ENCODE measurements at regions of chr21 and their contacts with region 1.

Region 1: GRCh38 chr21:34078915-34079314 is 5.5 kb downstream of the MRPS6 start:
- DNase-seq: peak in 5 of 9 experiments; percentile 22 to 56 (median 34)
- ATAC-seq: no peak
- H3K4me3 ChIP-seq: no peak overlapping the region
- H3K4me3 Mint-ChIP-seq: peak overlapping the region; percentile 49
- H3K27ac ChIP-seq: peak overlapping the region in 1 of 2 experiments; percentile 17
- H3K27ac Mint-ChIP-seq: peak overlapping the region; percentile 46
- H3K4me1 ChIP-seq: peaks cover 85% of the 10 kb centered on the region
- H3K4me1 Mint-ChIP-seq: peaks cover 95% of the 10 kb centered on the region
- H3K27me3 ChIP-seq: no peaks in the 10 kb centered on the region
- H3K27me3 Mint-ChIP-seq: no peaks in the 10 kb centered on the region
- CTCF ChIP-seq: no peak

Region 2: DNA sequence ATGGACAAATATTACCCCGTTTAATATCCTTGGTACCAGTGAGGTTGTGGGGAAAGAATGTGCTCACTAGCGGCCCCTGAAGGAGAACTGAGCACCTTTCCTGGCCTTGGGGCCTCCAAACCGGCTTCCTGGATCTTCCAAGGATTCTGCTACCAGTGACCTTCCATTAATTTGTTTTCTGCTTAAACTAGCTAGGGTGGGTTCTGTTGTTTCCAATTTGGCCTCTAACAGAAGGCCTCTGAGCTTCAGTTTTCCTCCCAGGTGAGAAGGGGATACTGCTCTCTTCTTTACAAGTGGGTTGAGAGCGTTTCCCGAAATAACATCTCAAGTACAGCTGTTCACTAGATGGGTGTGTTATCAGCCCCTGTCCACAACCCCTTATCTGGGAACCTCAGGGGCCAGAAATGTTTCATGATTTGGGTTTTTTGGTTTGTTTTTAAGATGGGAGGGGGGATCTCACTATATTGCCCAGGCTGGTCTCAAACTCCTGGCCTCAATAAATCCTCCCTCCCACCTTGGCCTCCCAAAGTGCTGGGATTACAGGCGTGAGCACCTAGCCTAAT is 692.6 kb before region 1 on chr21:
- CTCF ChIA-PET with region 1: no interaction called
- POLR2A ChIA-PET with region 1: no interaction called
- intact Hi-C with region 1: loop called in 1 of 2 experiments (anchors 5 kb)
- DNase-seq: peak in 1 of 9 experiments; percentile 19
- ATAC-seq: no peak
- H3K4me3 ChIP-seq: no peak overlapping the region
- H3K4me3 Mint-ChIP-seq: no peak overlapping the region
- H3K27ac ChIP-seq: no peak overlapping the region
- H3K27ac Mint-ChIP-seq: no peak overlapping the region
- H3K4me1 ChIP-seq: peaks cover 42% of the 10 kb centered on the region
- H3K4me1 Mint-ChIP-seq: peaks cover 46% of the 10 kb centered on the region
- H3K27me3 ChIP-seq: peaks cover 0 to 33% of the 10 kb centered on the region in 2 experiments
- H3K27me3 Mint-ChIP-seq: peaks cover 3% of the 10 kb centered on the region
- CTCF ChIP-seq: no peak

Region 3: DNA sequence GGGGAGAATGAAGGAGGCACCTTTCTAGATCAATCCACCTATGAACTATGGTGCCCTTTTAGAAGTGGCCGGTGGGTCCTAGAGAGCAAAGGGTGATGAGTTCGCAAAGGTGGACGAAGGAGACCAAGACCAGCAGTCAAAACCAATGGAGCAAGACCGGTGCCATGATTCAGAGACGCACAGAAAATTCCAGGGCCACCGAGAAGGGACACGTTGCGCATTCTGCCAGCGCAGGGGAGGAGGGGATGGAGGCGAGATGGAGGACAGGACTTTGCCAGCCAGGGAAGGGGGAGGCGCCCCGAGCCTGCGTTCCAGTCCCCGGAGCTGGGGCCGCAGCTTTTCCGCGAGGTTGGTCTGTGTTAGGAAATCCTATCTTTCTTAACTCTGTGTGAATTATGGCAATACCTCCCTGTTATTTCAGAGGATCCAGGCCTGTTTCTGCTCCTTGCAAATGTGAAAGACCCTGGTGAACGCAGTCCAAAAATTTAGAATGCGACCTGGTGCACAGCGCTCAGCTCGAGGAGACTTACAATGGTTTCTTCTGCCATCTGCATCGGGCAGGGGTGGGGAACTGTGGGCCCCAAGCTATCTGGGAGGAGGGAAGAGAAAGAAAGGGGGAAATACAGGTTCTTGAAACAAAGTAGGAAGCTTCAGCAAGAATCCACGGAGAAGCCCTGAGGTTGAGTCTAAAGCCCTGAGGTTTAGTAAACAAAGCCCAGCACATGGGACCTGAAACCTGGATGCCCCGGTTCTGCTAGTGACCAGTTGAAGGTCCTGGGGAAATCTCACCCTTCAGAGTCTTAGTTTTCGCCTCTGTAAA is 123.8 kb after region 1 on chr21:
- CTCF ChIA-PET with region 1: interaction called, 5 read pairs
- POLR2A ChIA-PET with region 1: interaction called, 6 read pairs
- intact Hi-C with region 1: loop called (anchors 5 kb)
- DNase-seq: no peak
- ATAC-seq: no peak
- H3K4me3 ChIP-seq: peak overlapping the region; percentile 46 to 56
- H3K4me3 Mint-ChIP-seq: peak overlapping the region; percentile 81
- H3K27ac ChIP-seq: no peak overlapping the region
- H3K27ac Mint-ChIP-seq: no peak overlapping the region
- H3K4me1 ChIP-seq: peaks cover 30% of the 10 kb centered on the region
- H3K4me1 Mint-ChIP-seq: peaks cover 41% of the 10 kb centered on the region
- H3K27me3 ChIP-seq: no peaks in the 10 kb centered on the region
- H3K27me3 Mint-ChIP-seq: no peaks in the 10 kb centered on the region
- CTCF ChIP-seq: no peak